GM12878 (cell line): ENCODE measurements at regions of chr15 and their contacts with region 1.

Region 1: DNA sequence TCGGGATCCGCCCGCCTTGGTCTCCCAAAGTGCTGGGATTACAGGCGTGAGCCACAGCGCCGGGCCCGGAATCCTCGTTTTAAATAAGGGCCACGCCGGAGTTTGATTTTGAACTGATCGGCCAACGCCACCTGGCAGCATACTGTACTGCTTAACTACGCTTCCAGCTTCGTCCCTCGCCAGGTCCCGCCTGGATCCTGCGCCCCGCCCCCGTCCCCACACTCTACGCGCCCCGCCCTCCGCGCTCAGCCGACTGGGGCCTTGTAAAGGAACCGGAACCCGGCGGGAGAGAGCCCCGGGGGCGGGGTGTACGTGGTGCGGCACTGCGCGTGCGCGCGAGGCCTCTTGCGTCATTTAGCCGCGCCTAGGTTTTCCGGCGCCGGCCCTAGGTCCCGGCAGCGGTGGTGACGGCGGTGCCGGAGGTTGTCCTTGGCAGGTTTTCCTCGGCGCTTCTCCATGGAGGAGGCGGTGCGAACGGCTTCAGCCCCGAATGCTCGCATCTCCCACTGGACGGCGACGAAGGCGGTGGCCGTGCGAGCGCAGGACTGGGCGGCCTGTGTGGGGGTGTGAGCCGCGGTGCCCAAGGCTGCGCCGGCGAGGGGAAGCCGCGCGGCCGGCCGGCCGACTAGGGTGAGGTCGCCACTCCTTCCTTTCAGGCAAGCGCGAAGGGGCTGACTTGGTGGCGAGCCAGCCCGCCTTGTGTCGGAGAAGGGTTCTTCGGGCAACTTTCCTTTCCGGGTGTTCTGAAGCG is at the start of gene NIPA2:
- DNase-seq: peak; percentile 90
- ATAC-seq: peak; percentile 91
- H3K4me3 ChIP-seq: peak within 1 kb of the TSS; percentile 90
- H3K27ac ChIP-seq: peak within 1 kb of the TSS; percentile 88
- H3K4me1 ChIP-seq: peaks cover 9% of the 10 kb centered on the region
- H3K27me3 ChIP-seq: no peaks in the 10 kb centered on the region
- CTCF ChIP-seq: peak in 1 of 3 experiments; percentile 10; a peak in 2 of 6 replicates
- EP300 ChIP-seq: peak; percentile 31; a peak in 1 of 4 replicates
- POLR2A ChIP-seq: peak; percentile 94
- RAD21 ChIP-seq: no peak
- polyA plus RNA-seq, gene NIPA2: 24.4 to 36.3 TPM

Region 2: DNA sequence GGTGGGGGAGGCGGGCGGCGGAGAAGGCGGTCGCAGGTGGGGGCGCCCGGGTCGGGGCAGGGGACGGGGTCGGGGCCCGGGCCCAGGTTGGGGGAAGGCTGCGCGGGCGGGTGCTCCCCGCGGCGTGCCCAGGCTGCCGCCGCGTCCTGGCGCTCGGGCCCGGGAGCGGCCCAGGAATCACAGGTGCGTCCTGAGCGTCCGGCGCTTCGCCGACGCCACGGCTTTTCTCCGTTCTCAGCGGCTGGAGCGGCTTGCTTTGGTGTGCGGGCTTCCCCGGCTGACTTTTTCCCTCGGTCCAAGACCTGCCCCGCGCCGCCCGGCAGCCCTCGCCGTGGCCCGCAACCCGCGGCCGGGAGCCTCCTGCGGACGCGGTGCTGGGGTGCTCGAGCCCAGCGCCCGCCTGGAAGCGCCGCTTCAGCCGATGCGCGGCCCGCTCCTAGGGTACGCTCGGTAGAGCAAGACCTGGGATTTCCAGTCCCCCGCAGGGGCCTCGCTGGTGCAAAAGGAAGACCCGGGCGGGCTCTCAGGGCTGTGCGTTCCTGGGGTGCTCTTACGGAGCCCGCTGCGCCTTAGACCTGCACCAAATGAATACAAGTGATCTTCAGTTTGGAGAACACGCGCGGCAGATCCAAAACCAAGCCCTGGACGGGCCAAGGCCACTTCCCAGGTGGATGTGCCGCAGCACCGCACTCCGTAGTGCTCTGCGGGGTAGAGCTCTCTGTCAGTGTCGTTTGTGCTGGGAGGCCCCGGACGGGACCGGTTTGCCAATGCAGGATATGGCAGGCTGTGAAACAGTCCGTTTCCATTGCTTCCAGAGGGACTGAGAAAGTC is 51.4 kb before region 1 on chr15:
- CTCF ChIA-PET with region 1: interaction called, 3 read pairs
- POLR2A ChIA-PET with region 1: interaction called, 8 read pairs
- RAD21 ChIA-PET with region 1: interaction called, 5 read pairs
- SMC1A ChIA-PET with region 1: interaction called, 16 read pairs
- in situ Hi-C with region 1: no loop called
- intact Hi-C with region 1: no loop called
- DNase-seq: no peak
- ATAC-seq: peak; percentile 29
- H3K4me3 ChIP-seq: peak overlapping the region; percentile 99
- H3K27ac ChIP-seq: peak overlapping the region; percentile 78
- H3K4me1 ChIP-seq: peaks cover 11% of the 10 kb centered on the region
- H3K27me3 ChIP-seq: no peaks in the 10 kb centered on the region
- CTCF ChIP-seq: no peak
- EP300 ChIP-seq: no peak
- POLR2A ChIP-seq: no peak
- RAD21 ChIP-seq: no peak

Region 3: DNA sequence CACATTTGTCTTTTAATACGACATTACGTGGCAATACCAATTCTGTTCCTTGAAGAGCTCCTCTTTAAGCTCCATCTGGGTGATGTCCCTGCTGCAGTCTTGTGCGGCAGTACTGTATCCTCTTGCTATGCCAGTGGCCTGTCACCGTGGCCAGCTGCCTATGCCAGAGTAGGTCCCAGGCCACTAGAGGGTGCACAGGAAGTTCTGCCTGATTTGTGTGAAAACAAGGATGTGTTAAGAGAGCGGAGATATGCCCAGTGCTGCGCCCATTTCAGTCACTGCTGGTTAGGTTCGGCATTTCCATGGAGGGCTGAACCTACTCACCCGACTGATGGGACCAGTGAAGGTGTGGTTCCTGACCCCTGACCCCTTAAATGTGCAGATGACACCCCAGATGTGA is 26.8 kb before region 1 on chr15:
- CTCF ChIA-PET with region 1: interaction called, 3 read pairs
- POLR2A ChIA-PET with region 1: interaction called, 5 read pairs
- RAD21 ChIA-PET with region 1: interaction called, 3 read pairs
- SMC1A ChIA-PET with region 1: interaction called, 4 read pairs
- in situ Hi-C with region 1: no loop called
- intact Hi-C with region 1: loop called (anchors 2 kb)
- DNase-seq: no peak
- ATAC-seq: peak; percentile 56
- H3K4me3 ChIP-seq: no peak overlapping the region
- H3K27ac ChIP-seq: no peak overlapping the region
- H3K4me1 ChIP-seq: peaks cover 21% of the 10 kb centered on the region
- H3K27me3 ChIP-seq: no peaks in the 10 kb centered on the region
- CTCF ChIP-seq: peak; percentile 21 to 35 (median 34); a peak in 4 of 6 replicates
- EP300 ChIP-seq: no peak
- POLR2A ChIP-seq: no peak
- RAD21 ChIP-seq: 0 out of 2 replicates have a peak, but pooled peaks have one; percentile 11

Region 4: DNA sequence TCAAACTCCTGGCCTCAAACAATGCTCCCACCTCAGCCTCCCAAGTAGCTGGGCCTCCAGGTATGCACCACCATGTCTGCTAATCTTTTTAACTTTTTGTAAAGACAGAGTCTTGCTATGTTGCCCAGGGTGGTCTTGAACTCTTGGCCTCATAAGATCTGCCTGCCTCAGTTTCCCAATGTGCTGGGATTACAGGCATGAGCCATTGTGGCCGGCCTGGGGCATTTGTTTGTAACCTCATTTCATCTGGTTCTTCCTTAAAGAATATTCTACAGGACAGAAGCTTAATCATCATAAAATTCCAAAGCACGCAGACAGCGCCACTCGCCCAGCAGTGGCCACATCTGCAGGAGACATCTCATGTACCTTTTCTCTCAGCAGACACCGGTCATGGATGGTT is 165.3 kb after region 1 on chr15:
- CTCF ChIA-PET with region 1: no interaction called
- POLR2A ChIA-PET with region 1: no interaction called
- RAD21 ChIA-PET with region 1: no interaction called
- SMC1A ChIA-PET with region 1: no interaction called
- in situ Hi-C with region 1: no loop called
- intact Hi-C with region 1: no loop called
- DNase-seq: no peak
- ATAC-seq: no peak
- H3K4me3 ChIP-seq: no peak overlapping the region
- H3K27ac ChIP-seq: no peak overlapping the region
- H3K4me1 ChIP-seq: no peaks in the 10 kb centered on the region
- H3K27me3 ChIP-seq: no peaks in the 10 kb centered on the region
- CTCF ChIP-seq: no peak
- EP300 ChIP-seq: no peak
- POLR2A ChIP-seq: no peak
- RAD21 ChIP-seq: no peak